Astrocyte of the cerebellum (primary cell): ENCODE measurements at regions of chr11 and their contacts with region 1.

Region 1: GRCh38 chr11:122863704-122864326 is 18.7 kb upstream of the JHY start:
- DNase-seq: peak; percentile 36
- H3K4me3 ChIP-seq: no peak overlapping the region
- CTCF ChIP-seq: peak; percentile 90

Region 2: DNA sequence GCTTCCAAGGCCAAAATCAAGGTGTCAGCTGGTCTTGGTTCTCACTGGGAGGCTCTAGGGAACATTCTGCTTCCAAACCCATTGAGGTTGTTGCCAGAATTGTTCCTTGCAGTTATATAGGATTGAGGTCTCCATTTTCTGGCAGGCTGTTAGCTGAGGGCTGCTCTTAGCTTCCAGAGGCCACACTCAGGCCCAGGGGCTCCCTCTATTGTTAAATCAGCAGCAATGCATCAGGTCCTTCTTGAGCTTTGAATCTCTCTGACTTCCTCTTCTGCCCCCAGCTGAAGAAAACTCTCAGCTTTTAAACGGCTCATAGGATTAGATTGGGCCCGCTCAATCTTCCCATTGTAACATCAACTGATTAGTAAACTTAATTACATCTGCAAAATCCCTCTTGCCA is 157.2 kb after region 1 on chr11:
- in situ Hi-C with region 1: loop called (anchors 10 kb)
- DNase-seq: peak; percentile 12
- H3K4me3 ChIP-seq: no peak overlapping the region
- CTCF ChIP-seq: peak; percentile 78